B cell (primary cell): ENCODE measurements at regions of chr6 and their contacts with region 1.

Region 1: GRCh38 chr6:26156076-26156849 is 69.0 kb downstream of the HFE start:
- DNase-seq: peak; percentile 95
- ATAC-seq: peak; percentile 58
- H3K4me3 ChIP-seq: peak overlapping the region; percentile 75 to 95 (median 93)
- H3K4me3 Mint-ChIP-seq: peak overlapping the region; percentile 89
- H3K27ac ChIP-seq: peak overlapping the region; percentile 87 to 88
- H3K27ac Mint-ChIP-seq: peak overlapping the region; percentile 96
- H3K4me1 ChIP-seq: peaks cover 23 to 32% of the 10 kb centered on the region in 2 donors
- H3K4me1 Mint-ChIP-seq: peaks cover 34% of the 10 kb centered on the region
- H3K27me3 ChIP-seq: no peaks in the 10 kb centered on the region
- H3K27me3 Mint-ChIP-seq: no peaks in the 10 kb centered on the region
- CTCF ChIP-seq: no peak

Region 2: GRCh38 chr6:25902071-25902470 is 254.2 kb before region 1 on chr6:
- CTCF ChIA-PET with region 1: no interaction called
- POLR2A ChIA-PET with region 1: no interaction called
- intact Hi-C with region 1: no loop called
- DNase-seq: peak; percentile 9
- ATAC-seq: no peak
- H3K4me3 ChIP-seq: no peak overlapping the region
- H3K4me3 Mint-ChIP-seq: no peak overlapping the region
- H3K27ac ChIP-seq: no peak overlapping the region
- H3K27ac Mint-ChIP-seq: no peak overlapping the region
- H3K4me1 ChIP-seq: peaks cover 3 to 6% of the 10 kb centered on the region in 2 donors
- H3K4me1 Mint-ChIP-seq: peaks cover 4% of the 10 kb centered on the region
- H3K27me3 ChIP-seq: no peaks in the 10 kb centered on the region
- H3K27me3 Mint-ChIP-seq: peaks cover 3% of the 10 kb centered on the region
- CTCF ChIP-seq: no peak

Region 3: GRCh38 chr6:26031595-26032339 is 124.5 kb before region 1 on chr6:
- CTCF ChIA-PET with region 1: interaction called, 4 read pairs
- POLR2A ChIA-PET with region 1: interaction called, 43 read pairs
- intact Hi-C with region 1: loop called (anchors 2 kb)
- DNase-seq: peak; percentile 90
- ATAC-seq: peak; percentile 63
- H3K4me3 ChIP-seq: peak overlapping the region; percentile 67 to 85 (median 69)
- H3K4me3 Mint-ChIP-seq: peak overlapping the region; percentile 96
- H3K27ac ChIP-seq: peak overlapping the region; percentile 76 to 78
- H3K27ac Mint-ChIP-seq: peak overlapping the region; percentile 87
- H3K4me1 ChIP-seq: peaks cover 26 to 36% of the 10 kb centered on the region in 2 donors
- H3K4me1 Mint-ChIP-seq: peaks cover 46% of the 10 kb centered on the region
- H3K27me3 ChIP-seq: no peaks in the 10 kb centered on the region
- H3K27me3 Mint-ChIP-seq: no peaks in the 10 kb centered on the region
- CTCF ChIP-seq: no peak

Region 4: DNA sequence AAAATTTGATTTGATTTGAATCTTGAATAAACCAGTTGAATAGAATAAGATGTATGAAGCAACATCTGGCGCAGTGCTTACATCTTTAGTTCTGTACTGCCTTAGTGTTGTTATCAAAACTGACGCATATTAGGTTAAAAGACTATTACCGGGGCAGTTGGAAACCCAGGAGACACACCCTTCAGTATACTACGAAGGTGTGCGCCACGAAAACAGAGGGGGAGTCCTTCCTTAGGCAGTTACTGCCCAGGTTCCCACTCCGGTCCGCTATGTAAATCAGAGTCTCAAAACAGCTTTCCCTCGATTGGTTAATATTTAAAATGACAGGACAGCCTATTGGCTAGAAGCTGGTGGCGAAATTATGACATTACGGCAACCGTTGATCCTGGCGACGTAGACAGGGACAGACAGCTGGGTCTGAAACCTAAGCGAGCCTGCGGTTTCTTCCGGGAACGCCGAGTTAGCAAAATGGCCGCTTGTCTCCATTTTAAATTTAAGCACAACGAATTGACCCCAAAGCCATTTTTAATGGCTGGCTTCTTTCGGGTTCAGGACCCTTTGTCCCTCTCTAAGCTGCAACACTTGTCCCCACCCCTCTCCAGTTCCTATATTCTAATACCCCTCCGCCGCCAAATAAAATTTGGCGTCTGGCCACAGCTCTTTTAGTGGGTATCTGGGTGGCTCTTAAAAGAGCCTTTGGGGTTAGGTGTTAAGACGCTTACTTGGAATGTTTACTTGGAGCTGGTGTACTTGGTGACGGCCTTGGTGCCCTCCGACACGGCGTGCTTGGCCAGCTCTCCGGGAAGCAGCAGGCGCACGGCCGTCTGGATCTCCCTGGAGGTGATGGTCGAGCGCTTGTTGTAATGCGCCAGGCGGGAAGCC is 33.2 kb before region 1 on chr6:
- CTCF ChIA-PET with region 1: interaction called, 69 read pairs
- POLR2A ChIA-PET with region 1: interaction called, 481 read pairs
- intact Hi-C with region 1: loop called (anchors 1 kb)
- DNase-seq: peak; percentile 97
- ATAC-seq: peak; percentile 59
- H3K4me3 ChIP-seq: peak overlapping the region; percentile 87 to 100 (median 96)
- H3K4me3 Mint-ChIP-seq: peak overlapping the region; percentile 93
- H3K27ac ChIP-seq: peak overlapping the region; percentile 87 to 88
- H3K27ac Mint-ChIP-seq: peak overlapping the region; percentile 97
- H3K4me1 ChIP-seq: peaks cover 19 to 23% of the 10 kb centered on the region in 2 donors
- H3K4me1 Mint-ChIP-seq: peaks cover 26% of the 10 kb centered on the region
- H3K27me3 ChIP-seq: no peaks in the 10 kb centered on the region
- H3K27me3 Mint-ChIP-seq: no peaks in the 10 kb centered on the region
- CTCF ChIP-seq: no peak

Region 5: DNA sequence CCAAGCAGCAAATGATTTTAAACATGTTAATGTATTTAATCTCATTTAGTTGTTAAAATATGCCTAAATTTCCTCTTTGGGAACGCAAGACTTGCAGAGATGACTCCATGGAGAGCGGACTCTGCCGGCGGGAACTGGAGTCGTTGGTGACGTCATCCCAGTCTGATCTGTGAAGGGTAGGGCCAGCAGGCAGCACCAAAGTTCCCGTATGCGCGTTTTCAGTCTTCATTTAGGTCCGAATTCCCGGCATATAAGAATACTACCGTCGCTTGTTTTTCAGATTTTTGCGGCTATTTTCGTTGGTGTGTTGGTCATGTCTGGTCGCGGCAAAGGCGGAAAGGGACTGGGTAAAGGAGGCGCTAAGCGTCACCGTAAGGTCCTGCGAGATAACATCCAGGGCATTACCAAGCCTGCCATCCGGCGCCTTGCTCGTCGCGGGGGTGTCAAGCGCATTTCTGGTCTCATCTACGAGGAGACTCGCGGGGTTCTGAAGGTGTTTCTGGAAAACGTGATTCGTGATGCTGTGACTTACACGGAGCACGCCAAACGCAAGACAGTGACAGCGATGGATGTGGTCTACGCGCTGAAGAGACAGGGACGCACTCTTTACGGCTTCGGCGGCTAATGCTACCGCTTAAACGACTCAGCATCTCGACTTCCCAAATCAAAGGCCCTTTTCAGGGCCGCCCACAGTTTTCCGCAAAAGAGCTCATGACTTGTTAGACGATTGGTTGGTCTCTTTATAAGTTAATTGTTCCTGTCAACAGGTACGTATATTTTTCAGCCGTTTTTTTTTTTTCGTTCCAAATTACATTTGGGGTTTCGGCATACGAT is 48.3 kb after region 1 on chr6:
- CTCF ChIA-PET with region 1: interaction called, 42 read pairs
- POLR2A ChIA-PET with region 1: interaction called, 305 read pairs
- intact Hi-C with region 1: loop called (anchors 1 kb)
- DNase-seq: peak; percentile 96
- ATAC-seq: peak; percentile 65
- H3K4me3 ChIP-seq: peak overlapping the region; percentile 76 to 94 (median 81)
- H3K4me3 Mint-ChIP-seq: no peak overlapping the region
- H3K27ac ChIP-seq: peak overlapping the region; percentile 88 to 96
- H3K27ac Mint-ChIP-seq: no peak overlapping the region
- H3K4me1 ChIP-seq: peaks cover 26 to 38% of the 10 kb centered on the region in 2 donors
- H3K4me1 Mint-ChIP-seq: peaks cover 30% of the 10 kb centered on the region
- H3K27me3 ChIP-seq: no peaks in the 10 kb centered on the region
- H3K27me3 Mint-ChIP-seq: no peaks in the 10 kb centered on the region
- CTCF ChIP-seq: no peak

Region 6: GRCh38 chr6:26249957-26250697 is 93.9 kb after region 1 on chr6:
- CTCF ChIA-PET with region 1: no interaction called
- POLR2A ChIA-PET with region 1: interaction called, 12 read pairs
- intact Hi-C with region 1: no loop called
- DNase-seq: peak; percentile 88
- ATAC-seq: peak; percentile 67
- H3K4me3 ChIP-seq: peak overlapping the region; percentile 68 to 90 (median 83)
- H3K4me3 Mint-ChIP-seq: peak overlapping the region; percentile 97
- H3K27ac ChIP-seq: peak overlapping the region; percentile 73 to 74
- H3K27ac Mint-ChIP-seq: peak overlapping the region; percentile 97
- H3K4me1 ChIP-seq: peaks cover 8 to 16% of the 10 kb centered on the region in 2 donors
- H3K4me1 Mint-ChIP-seq: peaks cover 43% of the 10 kb centered on the region
- H3K27me3 ChIP-seq: no peaks in the 10 kb centered on the region
- H3K27me3 Mint-ChIP-seq: no peaks in the 10 kb centered on the region
- CTCF ChIP-seq: peak; percentile 70

Region 7: DNA sequence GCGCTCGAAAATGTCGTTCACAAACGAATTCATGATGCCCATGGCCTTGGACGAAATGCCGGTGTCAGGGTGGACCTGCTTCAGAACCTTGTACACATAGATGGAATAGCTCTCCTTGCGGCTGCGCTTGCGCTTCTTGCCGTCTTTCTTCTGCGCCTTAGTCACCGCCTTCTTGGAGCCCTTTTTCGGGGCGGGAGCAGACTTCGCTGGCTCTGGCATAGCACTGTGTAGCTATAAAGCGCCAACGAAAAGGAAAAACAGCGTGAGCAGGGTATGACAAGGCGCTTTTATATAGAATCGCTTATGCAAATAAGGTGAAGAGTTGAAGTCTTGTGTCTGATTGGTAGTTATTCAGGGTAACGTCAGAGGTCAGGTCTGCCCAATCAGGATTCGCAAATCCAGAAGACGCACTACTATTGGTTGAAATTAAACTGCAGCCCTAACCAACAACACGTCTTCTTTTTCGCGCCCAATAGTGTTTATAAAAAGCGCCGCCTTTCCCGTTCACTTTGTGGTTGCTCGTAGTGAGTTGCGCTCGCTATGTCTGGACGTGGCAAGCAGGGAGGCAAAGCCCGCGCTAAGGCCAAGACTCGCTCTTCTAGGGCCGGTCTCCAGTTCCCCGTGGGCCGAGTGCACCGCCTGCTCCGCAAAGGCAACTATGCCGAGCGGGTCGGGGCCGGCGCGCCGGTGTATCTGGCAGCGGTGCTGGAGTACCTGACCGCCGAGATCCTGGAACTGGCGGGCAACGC is 976.4 kb after region 1 on chr6:
- CTCF ChIA-PET with region 1: no interaction called
- POLR2A ChIA-PET with region 1: interaction called, 5 read pairs
- intact Hi-C with region 1: loop called (anchors 2 kb)
- DNase-seq: no peak
- ATAC-seq: peak; percentile 84
- H3K4me3 ChIP-seq: peak overlapping the region; percentile 70 to 81 (median 74)
- H3K4me3 Mint-ChIP-seq: no peak overlapping the region
- H3K27ac ChIP-seq: peak overlapping the region; percentile 83
- H3K27ac Mint-ChIP-seq: no peak overlapping the region
- H3K4me1 ChIP-seq: peaks cover 14 to 24% of the 10 kb centered on the region in 2 donors
- H3K4me1 Mint-ChIP-seq: peaks cover 23% of the 10 kb centered on the region
- H3K27me3 ChIP-seq: no peaks in the 10 kb centered on the region
- H3K27me3 Mint-ChIP-seq: no peaks in the 10 kb centered on the region
- CTCF ChIP-seq: no peak

Region 8: GRCh38 chr6:27864906-27865849 is 1708.9 kb after region 1 on chr6:
- CTCF ChIA-PET with region 1: interaction called, 3 read pairs
- POLR2A ChIA-PET with region 1: interaction called, 30 read pairs
- intact Hi-C with region 1: no loop called
- DNase-seq: peak; percentile 97
- ATAC-seq: peak; percentile 80
- H3K4me3 ChIP-seq: peak overlapping the region; percentile 60 to 82 (median 69)
- H3K4me3 Mint-ChIP-seq: peak overlapping the region; percentile 97
- H3K27ac ChIP-seq: peak overlapping the region; percentile 81 to 83
- H3K27ac Mint-ChIP-seq: peak overlapping the region; percentile 97
- H3K4me1 ChIP-seq: peaks cover 13 to 35% of the 10 kb centered on the region in 2 donors
- H3K4me1 Mint-ChIP-seq: peaks cover 45% of the 10 kb centered on the region
- H3K27me3 ChIP-seq: no peaks in the 10 kb centered on the region
- H3K27me3 Mint-ChIP-seq: no peaks in the 10 kb centered on the region
- CTCF ChIP-seq: no peak